HEK293 (cell line): ENCODE measurements at regions of chr18 and their contacts with region 1.

Region 1: DNA sequence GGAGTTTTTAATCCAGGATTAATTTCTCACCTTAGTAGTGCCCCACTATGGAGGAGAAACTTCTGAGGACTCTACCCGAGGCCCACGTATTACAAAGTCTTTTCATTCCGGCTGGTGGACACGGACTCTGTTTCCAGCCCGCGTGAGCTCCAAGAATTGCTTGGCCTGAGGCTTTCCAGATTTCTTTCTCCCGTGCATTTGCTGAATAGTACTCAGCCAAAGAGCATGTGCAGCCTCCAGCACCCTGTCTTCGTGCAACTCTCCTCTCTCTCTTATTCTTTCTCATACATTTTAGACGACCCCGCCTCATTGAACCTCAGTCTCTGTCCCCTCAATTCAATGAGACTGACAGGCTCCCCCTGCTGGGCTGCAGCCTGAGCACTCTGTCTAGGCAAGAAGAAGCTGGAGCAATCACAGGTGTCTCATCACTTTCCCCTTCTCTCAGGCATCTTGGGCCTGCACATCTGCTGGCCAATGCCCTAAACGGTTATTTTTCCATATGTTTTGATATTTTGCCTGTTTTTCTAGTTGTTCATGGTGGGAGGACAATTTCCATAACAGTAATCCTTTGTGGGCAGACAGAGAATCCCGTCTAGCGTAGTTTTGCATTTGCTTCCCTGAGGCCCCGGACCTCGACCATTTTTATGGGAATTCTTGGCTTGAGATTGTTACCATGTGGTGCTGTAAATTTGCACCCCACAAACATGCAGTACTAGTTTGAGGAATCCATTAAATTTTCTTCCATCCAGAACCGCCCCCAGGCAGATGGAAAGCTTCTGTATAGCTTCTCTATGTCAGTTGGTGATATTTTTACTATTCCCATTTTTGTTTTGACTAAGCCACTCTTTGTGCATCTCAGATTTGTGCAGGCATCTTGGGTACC is 50.1 kb upstream of the LPIN2 start:
- H3K4me3 ChIP-seq: no peak overlapping the region
- H3K27ac ChIP-seq: no peak overlapping the region
- H3K4me1 ChIP-seq: no peaks in the 10 kb centered on the region
- CTCF ChIP-seq: peak; percentile 61; the same call in 1 of the 2 replicates

Region 2: GRCh38 chr18:2515908-2516625 is 547.0 kb before region 1 on chr18:
- CTCF ChIA-PET with region 1: no interaction called
- POLR2A ChIA-PET with region 1: no interaction called
- H3K4me3 ChIP-seq: no peak overlapping the region
- H3K27ac ChIP-seq: no peak overlapping the region
- H3K4me1 ChIP-seq: peaks cover 5% of the 10 kb centered on the region; the same call in 1 of the 2 replicates
- CTCF ChIP-seq: no peak

Region 3: DNA sequence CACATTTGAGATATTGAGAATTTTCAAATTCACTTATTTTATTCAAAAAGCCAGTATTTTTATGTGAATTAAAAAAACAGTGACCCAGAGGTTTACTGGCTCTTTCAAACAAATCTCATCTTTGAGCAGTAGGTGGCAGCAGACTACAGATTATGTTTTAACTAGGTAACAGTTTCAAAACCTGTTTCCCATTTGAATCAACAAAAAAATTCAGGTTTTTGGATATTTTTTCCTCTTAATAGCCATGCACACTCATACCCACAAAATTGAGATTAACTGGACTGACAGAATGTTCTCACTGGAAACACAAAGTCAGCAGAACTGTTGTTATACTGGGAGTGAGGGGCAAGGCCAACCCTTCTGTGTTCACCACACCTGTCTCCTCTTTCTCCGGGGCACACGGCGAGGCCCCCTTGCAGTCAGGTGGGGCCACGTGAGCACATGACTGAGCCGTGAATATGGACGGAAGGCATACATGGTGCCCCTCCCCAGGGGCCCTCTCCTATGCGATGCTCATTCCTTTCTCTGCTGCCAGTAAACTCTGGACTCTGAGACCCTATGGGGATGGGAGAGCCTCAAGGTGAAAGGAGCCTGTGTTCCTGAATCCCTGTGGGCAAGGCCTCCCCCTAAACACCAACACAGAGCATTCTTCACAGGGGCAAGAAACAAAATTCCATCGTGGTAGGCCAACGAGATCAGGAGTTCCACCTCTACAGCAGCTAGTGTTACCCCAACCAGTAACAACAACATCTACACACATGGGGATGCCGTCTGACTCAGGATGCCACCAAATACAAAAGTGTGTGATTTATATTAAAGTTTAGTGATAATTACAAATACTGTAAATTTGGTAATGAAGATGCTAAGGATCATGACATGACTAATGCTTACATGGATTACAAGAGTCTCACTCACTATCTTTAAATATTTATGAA is 130.5 kb before region 1 on chr18:
- CTCF ChIA-PET with region 1: interaction called, 12 read pairs
- POLR2A ChIA-PET with region 1: no interaction called
- H3K4me3 ChIP-seq: no peak overlapping the region
- H3K27ac ChIP-seq: no peak overlapping the region
- H3K4me1 ChIP-seq: no peaks in the 10 kb centered on the region
- CTCF ChIP-seq: peak; percentile 33; the same call in 1 of the 2 replicates

Region 4: GRCh38 chr18:3016585-3017297 is 46.3 kb before region 1 on chr18:
- CTCF ChIA-PET with region 1: interaction called, 12 read pairs
- POLR2A ChIA-PET with region 1: no interaction called
- H3K4me3 ChIP-seq: no peak overlapping the region
- H3K27ac ChIP-seq: no peak overlapping the region
- H3K4me1 ChIP-seq: no peaks in the 10 kb centered on the region; the same call in 1 of the 2 replicates
- CTCF ChIP-seq: no peak

Region 5: DNA sequence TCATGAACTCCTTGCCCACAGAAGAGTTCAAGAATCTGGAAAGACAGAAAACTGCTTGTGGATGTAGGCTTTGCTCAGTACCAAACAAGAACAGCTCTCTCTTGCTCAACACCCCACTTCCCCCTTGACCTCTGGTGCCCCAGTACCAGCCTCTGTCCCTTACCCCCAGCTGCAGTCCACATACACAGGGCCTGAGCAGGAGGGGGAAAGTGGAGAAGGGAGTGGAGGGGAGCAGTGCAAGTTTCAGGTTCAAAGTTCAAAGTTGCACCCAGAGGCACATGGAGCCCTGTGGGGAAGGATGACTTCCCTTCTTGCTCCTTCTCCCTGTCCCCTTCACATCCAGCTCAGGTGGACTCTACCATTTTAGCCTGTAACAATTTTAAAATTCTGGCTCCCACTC is 11.0 kb after region 1 on chr18:
- CTCF ChIA-PET with region 1: interaction called, 53 read pairs
- POLR2A ChIA-PET with region 1: no interaction called
- H3K4me3 ChIP-seq: no peak overlapping the region
- H3K27ac ChIP-seq: no peak overlapping the region
- H3K4me1 ChIP-seq: peaks cover 4% of the 10 kb centered on the region; the same call in 1 of the 2 replicates
- CTCF ChIP-seq: no peak

Region 6: DNA sequence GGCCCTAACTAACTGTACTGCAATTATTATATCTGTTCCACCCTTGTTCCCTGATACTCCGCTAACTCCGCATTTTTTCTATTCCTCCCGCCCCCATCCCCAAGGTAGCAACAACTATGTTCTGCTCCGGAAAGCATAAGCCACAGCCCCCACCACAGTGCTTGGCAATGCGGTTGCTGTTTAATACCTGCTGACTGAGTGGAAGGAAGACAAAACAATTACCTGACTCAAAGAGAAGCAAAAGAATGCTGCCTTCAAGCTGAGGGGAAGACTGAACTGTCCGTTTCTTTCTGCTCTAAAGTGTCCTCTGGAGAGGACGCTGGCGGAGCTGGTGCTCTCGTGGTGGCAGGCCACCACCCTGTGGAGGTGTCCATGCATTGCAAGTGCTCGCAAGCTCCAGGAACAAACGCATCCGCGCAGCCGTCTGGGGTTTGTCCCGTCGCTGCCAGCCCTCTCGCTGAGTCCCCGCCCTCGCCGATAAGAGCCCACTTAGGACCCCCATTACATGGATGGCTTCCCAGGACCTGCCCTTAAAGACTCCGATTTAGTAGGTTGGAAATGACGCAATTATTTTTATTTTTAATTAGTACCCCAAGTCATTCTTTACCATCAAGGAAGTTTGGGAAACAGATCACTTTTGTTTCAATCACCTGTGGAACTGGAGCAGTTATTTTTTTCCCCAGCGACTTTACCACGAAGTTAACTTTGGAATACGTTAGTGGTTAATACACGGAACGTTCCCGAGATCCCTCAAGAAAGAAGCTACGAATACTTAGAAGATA is 183.0 kb after region 1 on chr18:
- CTCF ChIA-PET with region 1: interaction called, 12 read pairs
- POLR2A ChIA-PET with region 1: interaction called, 4 read pairs
- H3K4me3 ChIP-seq: peak overlapping the region; percentile 34
- H3K27ac ChIP-seq: no peak overlapping the region
- H3K4me1 ChIP-seq: peaks cover 9% of the 10 kb centered on the region
- CTCF ChIP-seq: peak; percentile 95

Region 7: DNA sequence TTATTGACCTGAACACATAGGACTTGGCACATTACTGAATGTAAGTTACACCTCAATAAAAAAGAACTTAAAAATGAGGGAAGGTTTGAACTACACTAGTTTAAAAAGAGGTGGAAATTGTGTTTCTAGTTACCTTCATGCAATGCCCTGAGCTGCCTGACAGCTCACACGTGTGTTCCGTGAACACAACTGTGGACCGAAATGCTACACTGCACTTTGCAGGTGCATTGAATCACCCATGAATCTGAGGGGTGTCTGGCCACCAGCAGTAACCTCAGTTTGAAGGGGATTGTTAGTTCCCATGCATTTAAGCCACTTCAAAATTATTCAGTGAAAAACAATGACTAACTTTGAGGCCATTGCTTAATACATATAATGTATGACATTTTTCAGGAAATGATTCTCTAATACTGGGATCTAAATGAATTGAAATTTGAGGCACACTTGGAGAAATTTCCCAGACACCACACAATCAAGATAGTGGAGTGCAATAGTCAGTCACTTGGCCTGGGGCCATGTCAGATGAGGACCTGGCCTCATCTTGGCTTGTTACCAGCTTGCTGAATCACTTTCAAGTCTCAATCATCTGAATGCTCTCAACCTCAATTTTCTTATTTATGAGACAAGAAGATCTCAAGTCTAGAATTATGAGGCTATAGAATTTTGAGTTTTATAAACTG is 258.2 kb after region 1 on chr18:
- CTCF ChIA-PET with region 1: no interaction called
- POLR2A ChIA-PET with region 1: no interaction called
- H3K4me3 ChIP-seq: no peak overlapping the region
- H3K27ac ChIP-seq: no peak overlapping the region; the same call in 1 of the 2 replicates
- H3K4me1 ChIP-seq: peaks cover 15% of the 10 kb centered on the region
- CTCF ChIP-seq: no peak